ENCODE measurements at regions of chr12 and their contacts with region 1.

Region 1: GRCh38 chr12:53213348-53213747 is 6.3 kb upstream of the ITGB7 start:
- DNase-seq: no peak
- H3K4me3 ChIP-seq: no peak overlapping the region
- H3K27me3 ChIP-seq: no peaks in the 10 kb centered on the region
- CTCF ChIP-seq: peak; percentile 92

Region 2: GRCh38 chr12:53200458-53201176 is 12.7 kb before region 1 on chr12:
- CTCF ChIA-PET with region 1: interaction called, 37 read pairs
- POLR2A ChIA-PET with region 1: interaction called, 3 read pairs
- DNase-seq: no peak
- H3K4me3 ChIP-seq: no peak overlapping the region
- H3K27me3 ChIP-seq: no peaks in the 10 kb centered on the region
- CTCF ChIP-seq: no peak

Region 3: DNA sequence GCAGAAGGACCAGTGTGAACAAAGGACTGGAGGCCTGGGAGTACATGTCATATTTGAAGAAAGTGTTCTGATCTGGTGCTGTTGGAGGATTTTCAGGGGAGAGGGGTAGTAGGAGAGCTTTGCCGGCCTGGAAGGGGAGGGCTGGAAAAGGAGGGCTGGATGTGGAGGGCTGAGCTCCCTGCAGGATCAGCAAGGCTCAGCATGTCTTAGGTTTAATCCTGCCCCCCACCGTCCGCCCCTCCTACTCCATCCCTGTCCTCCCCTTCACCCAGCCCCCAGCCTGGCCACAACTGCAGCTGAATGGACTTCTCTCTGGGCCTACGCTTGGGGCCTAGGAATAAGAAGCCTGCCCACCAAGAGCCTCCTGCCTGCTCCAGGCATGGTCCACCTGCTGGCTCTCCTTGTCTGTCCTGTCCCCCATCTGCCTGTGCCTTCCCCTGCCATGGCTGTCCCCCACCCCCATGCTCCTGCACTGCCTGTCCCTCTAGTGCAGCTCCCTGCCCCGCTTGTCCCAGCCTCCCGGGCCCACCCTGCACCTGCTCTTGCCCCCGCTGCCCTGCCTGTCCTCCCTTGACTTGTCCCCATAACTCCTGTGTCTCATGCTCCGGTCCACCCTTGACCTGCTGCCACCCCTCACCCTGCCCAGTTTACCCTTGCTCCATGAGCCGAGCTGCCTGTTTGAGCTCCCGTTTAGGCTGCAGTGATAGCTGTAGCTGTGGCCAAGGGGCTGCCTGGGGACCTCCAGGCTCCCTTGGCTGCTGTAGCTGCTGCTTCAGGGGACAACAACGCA is 28.5 kb after region 1 on chr12:
- CTCF ChIA-PET with region 1: interaction called, 36 read pairs
- POLR2A ChIA-PET with region 1: no interaction called
- DNase-seq: no peak
- H3K4me3 ChIP-seq: no peak overlapping the region
- H3K27me3 ChIP-seq: peaks cover 18% of the 10 kb centered on the region
- CTCF ChIP-seq: no peak

Region 4: DNA sequence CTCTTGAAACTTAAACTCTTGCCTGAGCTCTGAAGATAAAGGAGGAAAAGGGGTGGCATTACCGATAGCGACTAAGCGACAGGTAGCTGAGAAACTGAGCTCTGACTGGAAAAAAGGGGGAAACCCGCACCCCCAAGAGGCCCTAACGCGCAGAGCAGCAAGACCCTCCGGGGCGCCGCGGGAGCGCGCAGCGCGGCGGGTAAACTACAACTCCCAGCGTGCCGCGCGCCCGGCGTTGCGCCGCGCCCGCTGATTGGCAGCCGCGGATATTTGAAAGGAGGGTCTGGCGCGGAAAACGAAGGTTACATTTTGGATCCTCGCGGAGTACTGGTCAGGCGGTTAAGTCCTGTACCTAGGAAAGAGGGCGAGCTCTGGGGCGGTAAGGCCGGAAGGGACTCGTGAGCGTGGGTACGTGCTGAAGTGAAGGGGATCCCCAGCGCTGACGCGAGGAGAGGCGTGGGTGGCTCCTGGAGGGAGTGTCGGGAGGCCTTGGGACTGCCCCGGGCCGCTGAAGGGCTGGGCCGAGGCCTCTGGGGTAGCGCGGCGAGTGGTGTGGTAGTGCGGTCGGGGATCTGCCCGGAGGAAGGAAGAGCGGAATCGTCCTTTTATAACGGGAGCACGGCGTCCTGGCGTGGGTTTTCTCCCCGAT is 54.8 kb after region 1 on chr12 and contains the start of gene ESPL1:
- CTCF ChIA-PET with region 1: interaction called, 68 read pairs
- POLR2A ChIA-PET with region 1: no interaction called
- DNase-seq: peak; percentile 26
- H3K4me3 ChIP-seq: peak within 1 kb of the TSS; percentile 78
- H3K27me3 ChIP-seq: no peaks in the 10 kb centered on the region
- CTCF ChIP-seq: peak; percentile 31; the same call in 1 of the 2 replicates
- polyA plus RNA-seq, gene ESPL1: 3.0 and 7.3 TPM in 2 replicates

Region 5: GRCh38 chr12:53287741-53288216 is 74.4 kb after region 1 on chr12:
- CTCF ChIA-PET with region 1: interaction called, 240 read pairs
- POLR2A ChIA-PET with region 1: no interaction called
- DNase-seq: no peak
- H3K4me3 ChIP-seq: no peak overlapping the region
- H3K27me3 ChIP-seq: no peaks in the 10 kb centered on the region
- CTCF ChIP-seq: peak; percentile 73

Region 6: DNA sequence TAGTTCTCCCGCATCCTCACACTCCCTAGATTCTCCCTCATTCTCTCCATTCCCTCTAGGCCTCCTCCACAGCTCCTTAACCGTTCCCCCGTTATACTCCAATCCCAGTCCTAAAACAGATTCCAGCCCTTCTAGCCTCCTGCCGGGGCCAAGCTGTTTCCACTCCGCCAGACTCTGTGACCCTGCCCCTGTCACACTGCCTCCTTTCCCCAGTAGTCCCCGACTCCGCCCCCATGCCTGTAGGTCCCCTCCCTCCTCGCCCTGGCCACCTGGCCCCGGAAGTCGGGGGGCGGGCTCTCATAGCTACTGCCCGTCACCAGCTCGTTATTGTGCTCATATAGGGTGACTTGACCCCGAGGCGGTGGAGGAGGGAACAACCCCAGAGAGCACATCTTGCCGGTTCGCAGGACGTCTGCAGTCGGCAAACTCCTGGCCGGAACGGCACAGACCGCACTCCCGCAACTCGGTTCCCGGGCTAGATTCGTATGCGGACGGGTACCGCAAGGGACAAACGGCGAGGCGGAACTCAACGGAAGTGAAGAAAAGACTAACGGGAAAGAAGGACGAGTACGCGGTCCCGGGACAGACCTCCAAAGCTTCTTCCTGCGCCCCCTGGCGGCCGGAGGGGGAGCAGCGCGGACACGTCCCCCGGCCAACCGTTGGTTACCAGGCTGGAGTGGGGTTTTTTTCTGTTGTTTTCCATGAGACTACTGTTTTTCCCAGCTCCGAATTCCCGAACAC is 107.9 kb after region 1 on chr12 and contains the start of gene AAAS:
- CTCF ChIA-PET with region 1: interaction called, 31 read pairs
- POLR2A ChIA-PET with region 1: no interaction called
- DNase-seq: peak; percentile 71
- H3K4me3 ChIP-seq: peak within 1 kb of the TSS; percentile 88
- H3K27me3 ChIP-seq: no peaks in the 10 kb centered on the region
- CTCF ChIP-seq: peak; percentile 100
- polyA plus RNA-seq, gene AAAS: 53.3 and 84.3 TPM in 2 replicates

Region 7: GRCh38 chr12:53352331-53353256 is 139.2 kb after region 1 on chr12:
- CTCF ChIA-PET with region 1: no interaction called
- POLR2A ChIA-PET with region 1: no interaction called
- DNase-seq: no peak
- H3K4me3 ChIP-seq: no peak overlapping the region
- H3K27me3 ChIP-seq: no peaks in the 10 kb centered on the region
- CTCF ChIP-seq: peak; percentile 83

Measured in BJ (cell line).